ENCODE measurements at regions of chr20 and their contacts with region 1.

Region 1: GRCh38 chr20:2172305-2173175 is 70.9 kb downstream of the STK35 start:
- DNase-seq: peak; percentile 76
- H3K27ac ChIP-seq: no peak overlapping the region
- CTCF ChIP-seq: peak; percentile 95

Region 2: GRCh38 chr20:1965520-1966351 is 206.8 kb before region 1 on chr20:
- CTCF ChIA-PET with region 1: interaction called, 20 read pairs
- POLR2A ChIA-PET with region 1: no interaction called
- DNase-seq: peak; percentile 79
- H3K27ac ChIP-seq: no peak overlapping the region
- CTCF ChIP-seq: peak; percentile 98

Region 3: DNA sequence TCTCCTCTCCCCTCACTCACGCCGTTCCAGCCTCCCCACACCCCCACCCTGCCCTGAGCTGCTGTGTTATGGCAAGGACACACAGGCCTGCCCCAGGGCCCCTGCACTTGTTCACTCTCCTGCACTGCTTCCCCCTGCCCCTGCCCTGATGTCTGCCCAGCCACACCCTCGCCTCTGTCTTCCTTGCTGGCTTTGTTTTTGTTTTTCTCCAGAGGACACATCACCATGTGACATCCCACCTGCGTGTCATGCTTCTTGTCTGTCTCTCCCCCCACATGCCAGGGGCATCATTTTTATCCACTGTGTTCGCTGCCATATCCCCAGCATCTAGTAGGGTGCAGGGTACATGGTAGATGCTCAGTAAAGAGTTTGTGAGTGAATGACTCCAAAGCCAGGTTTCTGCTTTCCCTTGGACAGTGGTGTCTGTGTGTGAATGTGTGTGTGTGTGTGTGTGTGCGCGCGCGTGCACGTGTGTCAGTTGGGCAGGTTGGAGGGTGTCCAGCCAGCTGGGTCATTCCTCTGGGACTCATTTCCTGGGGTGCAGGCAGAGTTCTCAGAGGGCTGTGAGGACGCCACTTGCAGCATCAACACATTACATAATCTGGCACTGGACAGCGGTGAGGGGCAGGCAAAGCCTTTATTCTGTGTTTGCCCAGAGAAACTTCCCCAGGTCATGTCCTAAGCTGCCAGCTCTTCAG is 10.3 kb before region 1 on chr20:
- CTCF ChIA-PET with region 1: interaction called, 10 read pairs
- POLR2A ChIA-PET with region 1: no interaction called
- DNase-seq: no peak
- H3K27ac ChIP-seq: no peak overlapping the region
- CTCF ChIP-seq: no peak

Region 4: GRCh38 chr20:2217857-2218539 is 45.5 kb after region 1 on chr20:
- CTCF ChIA-PET with region 1: no interaction called
- POLR2A ChIA-PET with region 1: no interaction called
- DNase-seq: no peak
- H3K27ac ChIP-seq: no peak overlapping the region
- CTCF ChIP-seq: no peak

Region 5: DNA sequence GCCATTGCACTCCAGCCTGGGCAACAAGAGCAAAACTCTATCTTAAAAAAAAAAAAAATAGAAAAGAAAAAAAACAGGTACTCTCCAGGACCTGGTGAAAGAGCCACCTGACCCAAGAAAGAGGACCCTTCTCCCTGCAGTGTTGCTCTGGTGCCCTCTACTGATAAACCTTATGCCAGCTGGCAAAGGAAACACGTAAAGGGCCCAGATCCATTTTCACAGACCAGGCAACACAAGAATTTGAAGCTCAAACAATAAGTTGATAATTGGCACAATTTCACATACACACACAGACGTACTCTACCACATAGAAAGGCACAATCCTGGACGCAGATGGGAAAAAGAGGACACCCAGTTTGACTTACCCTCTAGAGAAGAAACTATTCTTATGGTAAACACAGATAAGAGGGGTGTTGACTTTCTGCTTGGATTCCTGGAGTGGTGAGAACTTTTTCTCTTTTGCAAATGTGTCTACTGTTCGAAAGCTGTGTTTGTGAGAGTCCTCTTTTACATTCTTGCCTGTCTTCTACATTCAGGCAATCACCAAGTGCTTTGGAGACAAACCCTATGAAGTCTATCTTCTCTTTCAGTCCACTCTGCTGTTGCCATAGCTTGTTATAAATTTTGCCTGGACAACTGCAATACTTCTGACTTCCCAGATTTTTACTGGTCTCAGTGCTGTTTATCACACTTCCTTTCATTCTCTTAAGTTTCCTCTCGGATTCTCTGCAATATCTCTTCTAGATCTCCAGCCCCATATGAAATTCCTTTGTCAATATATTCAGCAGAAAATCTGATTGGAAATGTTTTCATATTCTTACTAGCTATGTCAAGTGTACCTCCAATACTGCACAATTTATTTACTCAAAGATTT is 304.4 kb after region 1 on chr20:
- CTCF ChIA-PET with region 1: interaction called, 11 read pairs
- POLR2A ChIA-PET with region 1: no interaction called
- DNase-seq: no peak
- H3K27ac ChIP-seq: no peak overlapping the region
- CTCF ChIP-seq: no peak

Region 6: GRCh38 chr20:2599288-2600006 is 426.9 kb after region 1 on chr20:
- CTCF ChIA-PET with region 1: no interaction called
- POLR2A ChIA-PET with region 1: no interaction called
- DNase-seq: no peak
- H3K27ac ChIP-seq: no peak overlapping the region
- CTCF ChIP-seq: no peak